GM10248 (cell line): ENCODE measurements at regions of chr6 and their contacts with region 1.

Region 1: DNA sequence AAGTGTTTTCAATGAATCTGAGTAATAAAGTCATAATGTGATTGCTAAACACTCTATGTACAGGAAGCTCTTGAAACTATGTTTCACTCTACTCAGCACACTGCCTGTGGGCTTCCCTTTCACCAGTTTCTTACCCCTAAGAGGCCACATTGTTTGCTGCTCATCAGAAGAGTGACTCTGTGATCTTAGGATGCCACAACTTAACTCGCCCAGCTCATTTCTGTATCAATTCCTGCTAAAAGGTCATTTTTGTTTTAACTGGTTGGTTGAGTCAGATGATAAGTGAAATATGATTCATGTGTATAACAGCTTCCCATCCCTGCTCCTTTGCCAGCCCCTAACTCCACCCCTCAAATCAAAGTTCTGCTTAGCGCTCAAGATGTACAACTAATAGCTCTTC is 9.8 kb upstream of the NDUFAF4 start:
- DNase-seq: peak; percentile 13
- CTCF ChIP-seq: no peak

Region 2: DNA sequence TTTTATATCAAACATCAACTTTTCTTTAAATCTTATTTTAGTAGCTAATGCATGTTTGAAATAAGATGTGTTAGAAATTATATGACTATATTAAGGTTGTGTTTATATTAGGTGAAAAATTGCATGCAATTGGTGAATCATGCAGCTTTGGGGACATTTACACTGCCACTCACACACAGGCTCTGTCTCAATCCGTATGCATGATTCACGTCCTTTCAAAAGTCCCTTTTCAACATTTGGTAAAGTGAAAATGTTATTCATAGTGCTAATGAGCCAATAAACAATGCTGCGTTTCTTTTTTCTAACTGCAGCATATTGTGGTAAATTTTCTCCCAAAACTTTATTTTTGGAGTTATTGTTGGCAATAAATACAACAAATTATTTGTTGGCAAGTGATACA is 693.7 kb before region 1 on chr6:
- CTCF ChIA-PET with region 1: no interaction called
- POLR2A ChIA-PET with region 1: no interaction called
- DNase-seq: no peak
- CTCF ChIP-seq: no peak

Region 3: DNA sequence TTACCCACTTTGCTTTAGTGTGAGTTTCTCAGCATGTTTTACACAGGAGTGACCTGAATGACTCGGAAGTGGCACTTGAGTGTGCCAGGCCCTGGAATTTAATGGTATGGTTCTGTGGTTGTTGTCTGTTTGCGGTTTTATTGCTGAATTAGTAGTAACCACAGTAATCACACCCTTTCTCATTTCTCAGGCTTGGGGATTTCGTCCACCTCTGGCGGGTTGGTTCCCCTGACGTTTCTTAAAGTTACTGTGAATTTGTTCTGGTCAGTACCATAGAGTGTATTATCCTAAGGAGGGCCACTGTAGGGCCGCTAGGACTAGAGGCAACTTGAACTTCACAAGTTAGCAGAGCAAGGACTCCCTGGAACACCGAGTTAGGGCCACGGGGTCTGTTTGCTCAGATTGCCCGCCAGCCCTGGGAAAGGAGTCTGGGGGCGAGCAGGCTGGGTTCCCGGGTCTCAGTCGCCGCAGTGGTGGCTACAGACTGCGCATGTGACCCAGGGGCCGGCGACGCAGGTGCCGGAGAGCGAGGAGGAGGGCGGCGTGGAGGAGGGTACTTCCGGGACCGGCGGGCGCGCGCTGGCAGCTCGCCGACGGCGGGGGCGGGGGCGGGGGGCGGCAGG is 16.5 kb after region 1 on chr6:
- CTCF ChIA-PET with region 1: interaction called, 17 read pairs
- POLR2A ChIA-PET with region 1: no interaction called
- DNase-seq: no peak
- CTCF ChIP-seq: no peak

Region 4: DNA sequence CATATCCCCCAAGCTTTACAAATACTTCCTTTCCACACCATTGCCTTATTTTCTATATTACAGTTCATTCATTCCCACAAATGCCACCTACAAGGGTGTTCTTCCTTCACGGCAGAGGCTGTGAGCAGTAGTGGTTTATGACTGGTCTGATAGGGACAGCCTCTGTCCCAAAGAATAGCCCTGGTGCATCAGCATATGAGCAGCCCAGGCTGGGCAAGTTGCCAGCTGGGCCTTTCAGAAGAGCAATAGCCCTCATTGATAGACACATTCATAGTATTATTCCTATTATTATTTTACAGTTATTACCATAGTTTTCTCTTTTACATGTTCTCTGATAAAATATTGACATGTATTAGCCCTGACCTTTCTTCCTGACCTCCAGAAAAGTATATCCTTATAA is 225.6 kb after region 1 on chr6:
- CTCF ChIA-PET with region 1: no interaction called
- POLR2A ChIA-PET with region 1: no interaction called
- DNase-seq: no peak
- CTCF ChIP-seq: no peak

Region 5: DNA sequence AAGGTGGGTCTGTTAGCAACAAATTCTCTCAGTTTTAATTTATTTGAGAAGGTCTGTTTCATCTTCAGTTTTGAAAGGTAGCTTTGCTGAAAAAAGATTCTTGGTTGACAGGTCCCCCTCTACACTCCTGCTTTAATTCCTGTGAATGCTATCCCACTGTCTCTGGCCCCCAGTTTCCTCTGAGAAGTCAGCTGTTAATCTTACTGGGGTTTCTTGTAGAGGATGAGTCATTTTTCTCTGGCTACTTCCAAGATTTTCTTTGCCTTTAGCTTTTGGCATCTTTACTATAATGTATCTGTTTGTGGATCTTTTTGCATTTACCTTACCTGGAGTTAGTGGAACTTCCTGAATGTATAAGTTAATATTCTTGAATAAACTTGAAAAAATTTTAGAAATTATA is 252.8 kb after region 1 on chr6:
- CTCF ChIA-PET with region 1: no interaction called
- POLR2A ChIA-PET with region 1: no interaction called
- DNase-seq: no peak
- CTCF ChIP-seq: no peak

Region 6: DNA sequence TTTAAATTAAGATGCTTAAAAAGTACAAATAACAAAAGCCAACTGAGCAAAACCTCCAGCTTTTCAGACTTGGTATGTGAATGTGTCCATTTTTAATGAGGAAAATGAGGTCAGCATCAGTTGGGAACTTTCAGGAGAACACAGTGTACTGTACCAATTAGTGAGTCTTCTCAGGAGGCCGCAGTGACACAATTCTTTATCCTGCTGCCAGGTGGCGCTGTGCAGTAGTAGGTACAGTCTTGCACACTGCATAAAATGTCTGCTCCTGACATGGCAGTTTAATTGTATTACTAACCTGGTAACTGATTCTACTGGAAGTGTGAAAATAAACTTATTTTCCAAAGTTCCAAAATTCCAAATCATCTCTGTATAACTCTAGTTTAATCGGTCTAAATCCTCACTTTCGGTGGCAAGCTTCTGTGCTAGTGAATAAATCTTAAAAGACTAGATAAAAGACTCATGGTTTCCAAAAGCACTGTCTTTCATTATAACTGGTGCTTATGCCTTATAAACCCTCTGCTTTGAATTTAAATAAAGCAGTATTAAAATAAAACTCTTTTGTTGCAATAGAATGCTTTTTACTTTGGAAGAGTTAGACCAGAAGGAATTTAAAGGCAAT is 590.3 kb after region 1 on chr6:
- CTCF ChIA-PET with region 1: no interaction called
- POLR2A ChIA-PET with region 1: no interaction called
- DNase-seq: peak; percentile 12
- CTCF ChIP-seq: peak; percentile 83